H1 (cell line): ENCODE measurements at regions of chr11 and their contacts with region 1.

Region 1: GRCh38 chr11:133834682-133835592 is 10.4 kb downstream of the SPATA19 start:
- DNase-seq: peak; percentile 68 to 78
- H3K4me3 ChIP-seq: no peak overlapping the region
- H3K27ac ChIP-seq: no peak overlapping the region
- H3K4me1 ChIP-seq: peaks cover 0 to 2% (median 0%) of the 10 kb centered on the region in 4 experiments; a peak in 3 of 7 replicates
- H3K27me3 ChIP-seq: no peaks in the 10 kb centered on the region
- CTCF ChIP-seq: peak; percentile 58 to 93 (median 89)
- EP300 ChIP-seq: no peak
- POLR2A ChIP-seq: no peak
- RAD21 ChIP-seq: peak; percentile 97

Region 2: GRCh38 chr11:133070791-133071190 is 764.1 kb before region 1 on chr11:
- CTCF ChIA-PET with region 1: interaction called, 10 read pairs
- POLR2A ChIA-PET with region 1: interaction called, 3 read pairs
- DNase-seq: no peak
- H3K4me3 ChIP-seq: no peak overlapping the region
- H3K27ac ChIP-seq: no peak overlapping the region
- H3K4me1 ChIP-seq: peaks cover 0 to 19% (median 12%) of the 10 kb centered on the region in 4 experiments; a peak in 6 of 7 replicates
- H3K27me3 ChIP-seq: no peaks in the 10 kb centered on the region
- CTCF ChIP-seq: peak in 2 of 3 experiments; percentile 13 to 33; a peak in 2 of 4 replicates
- EP300 ChIP-seq: no peak
- POLR2A ChIP-seq: no peak
- RAD21 ChIP-seq: peak in 1 of 2 experiments; percentile 13; a peak in 1 of 4 replicates

Region 3: GRCh38 chr11:133809569-133810491 is 25.1 kb before region 1 on chr11:
- CTCF ChIA-PET with region 1: interaction called, 12 read pairs
- POLR2A ChIA-PET with region 1: no interaction called
- DNase-seq: no peak
- H3K4me3 ChIP-seq: no peak overlapping the region
- H3K27ac ChIP-seq: no peak overlapping the region
- H3K4me1 ChIP-seq: peaks cover 2 to 14% (median 12%) of the 10 kb centered on the region in 4 experiments; a peak in 6 of 7 replicates
- H3K27me3 ChIP-seq: no peaks in the 10 kb centered on the region; a peak in 1 of 7 replicates
- CTCF ChIP-seq: peak in 1 of 3 experiments; percentile 14; a peak in 1 of 4 replicates
- EP300 ChIP-seq: no peak
- POLR2A ChIP-seq: no peak
- RAD21 ChIP-seq: 0 out of 4 replicates have a peak, but pooled peaks of 1 of the 2 experiments have one; percentile 14